ENCODE measurements at regions of chr19 and their contacts with region 1.

Region 1: GRCh38 chr19:23686621-23687423 is at the start of gene ZNF675:
- DNase-seq: peak; percentile 93
- ATAC-seq: peak; percentile 96
- H3K4me3 ChIP-seq: peak within 1 kb of the TSS; percentile 70 to 93 (median 83)
- H3K4me3 Mint-ChIP-seq: peak within 1 kb of the TSS; percentile 98
- H3K27ac ChIP-seq: peak within 1 kb of the TSS; percentile 80 to 90
- H3K27ac Mint-ChIP-seq: peak within 1 kb of the TSS; percentile 98
- H3K4me1 ChIP-seq: peaks cover 13 to 18% of the 10 kb centered on the region in 2 donors
- H3K4me1 Mint-ChIP-seq: peaks cover 48% of the 10 kb centered on the region
- H3K27me3 ChIP-seq: no peaks in the 10 kb centered on the region
- H3K27me3 Mint-ChIP-seq: no peaks in the 10 kb centered on the region
- CTCF ChIP-seq: no peak
- total RNA-seq, gene ZNF675: 46.1 and 46.7 TPM in 2 replicates

Region 2: DNA sequence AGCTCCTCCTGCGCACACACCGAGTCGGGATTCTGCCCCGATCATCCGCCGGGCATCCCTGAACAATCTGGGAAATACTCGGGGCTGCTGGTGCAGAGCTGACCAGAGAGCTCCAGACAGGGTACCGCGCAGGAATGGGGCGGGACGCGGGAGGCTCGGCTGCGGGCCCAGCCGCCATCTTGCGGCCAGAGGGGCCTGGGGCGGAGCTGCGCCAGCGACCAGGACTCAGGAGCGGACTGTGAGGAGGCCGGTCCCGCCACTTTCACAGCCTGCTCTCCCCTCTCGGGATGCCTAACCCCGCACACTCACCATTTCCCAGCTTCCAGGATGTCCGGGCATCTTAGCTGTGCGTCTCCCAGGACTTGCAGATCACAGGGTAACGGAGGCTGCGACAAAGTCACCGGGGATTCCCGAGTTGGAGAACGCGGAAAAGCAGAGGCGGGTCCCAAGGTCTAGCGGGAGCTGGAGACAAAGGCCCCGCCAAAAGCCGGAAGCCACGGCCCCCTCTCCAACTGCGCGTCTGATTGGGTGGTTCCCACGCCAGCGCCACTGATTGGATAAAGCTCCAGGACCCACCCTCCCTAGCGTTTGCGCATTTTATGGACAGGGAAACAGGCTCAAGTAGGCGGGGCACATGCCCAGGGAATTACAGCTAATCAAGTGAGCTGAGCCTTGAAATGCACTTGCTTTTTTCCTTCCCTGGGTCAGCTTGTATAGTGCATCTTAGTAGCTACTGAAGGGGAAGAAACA is 1835.1 kb before region 1 on chr19:
- CTCF ChIA-PET with region 1: no interaction called
- POLR2A ChIA-PET with region 1: no interaction called
- intact Hi-C with region 1: loop called (anchors 5 kb)
- DNase-seq: peak; percentile 90
- ATAC-seq: peak; percentile 99
- H3K4me3 ChIP-seq: peak overlapping the region; percentile 68 to 98 (median 96)
- H3K4me3 Mint-ChIP-seq: peak overlapping the region; percentile 95
- H3K27ac ChIP-seq: peak overlapping the region; percentile 74 to 93
- H3K27ac Mint-ChIP-seq: peak overlapping the region; percentile 91
- H3K4me1 ChIP-seq: peaks cover 5 to 15% of the 10 kb centered on the region in 2 donors
- H3K4me1 Mint-ChIP-seq: peaks cover 21% of the 10 kb centered on the region
- H3K27me3 ChIP-seq: no peaks in the 10 kb centered on the region
- H3K27me3 Mint-ChIP-seq: no peaks in the 10 kb centered on the region
- CTCF ChIP-seq: no peak

Region 3: DNA sequence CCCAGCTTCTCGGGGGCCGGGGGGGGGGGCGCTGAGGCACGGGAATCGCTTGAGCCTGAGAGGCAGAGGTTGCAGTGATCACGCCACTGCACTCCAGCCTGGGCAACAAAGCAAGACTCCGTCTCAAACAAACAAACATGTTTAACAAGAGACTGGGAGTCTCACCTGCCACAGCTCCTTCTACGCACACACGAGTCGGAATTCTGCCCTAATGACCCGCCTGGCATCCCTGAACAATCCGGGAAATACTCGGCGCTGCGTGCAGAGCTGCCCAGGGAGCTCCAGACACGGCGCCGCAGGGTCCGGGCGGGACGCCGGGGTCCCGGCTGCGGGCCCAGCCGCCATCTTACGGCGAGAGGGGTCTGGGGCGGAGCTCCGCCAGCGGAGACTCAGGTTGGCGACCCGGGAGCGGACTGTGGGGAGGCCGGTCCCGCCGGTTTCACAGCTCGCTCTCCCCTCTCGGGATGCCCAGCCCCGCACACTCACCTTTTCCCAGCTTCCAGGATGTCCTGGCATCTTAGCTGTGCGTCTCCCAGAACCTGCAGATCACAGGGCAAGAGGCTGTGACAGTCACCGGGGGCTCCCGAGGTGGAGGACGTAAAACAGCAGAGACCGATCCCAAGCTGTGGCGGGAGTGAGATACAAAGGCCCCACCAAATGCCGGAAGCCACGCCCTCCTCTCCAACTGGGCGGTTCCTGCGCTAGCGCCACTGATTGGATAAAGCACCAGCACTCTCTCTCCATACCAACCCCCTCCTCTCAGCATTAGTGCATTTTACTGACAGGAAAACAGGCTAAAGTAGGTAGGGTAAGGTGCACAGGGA is 413.0 kb before region 1 on chr19:
- CTCF ChIA-PET with region 1: no interaction called
- POLR2A ChIA-PET with region 1: no interaction called
- intact Hi-C with region 1: loop called (anchors 5 kb)
- DNase-seq: peak; percentile 91
- ATAC-seq: peak; percentile 99
- H3K4me3 ChIP-seq: peak overlapping the region; percentile 81 to 99 (median 96)
- H3K4me3 Mint-ChIP-seq: peak overlapping the region; percentile 98
- H3K27ac ChIP-seq: peak overlapping the region; percentile 85 to 89
- H3K27ac Mint-ChIP-seq: peak overlapping the region; percentile 97
- H3K4me1 ChIP-seq: peaks cover 6 to 20% of the 10 kb centered on the region in 2 donors
- H3K4me1 Mint-ChIP-seq: peaks cover 30% of the 10 kb centered on the region
- H3K27me3 ChIP-seq: no peaks in the 10 kb centered on the region
- H3K27me3 Mint-ChIP-seq: no peaks in the 10 kb centered on the region
- CTCF ChIP-seq: no peak

Region 4: GRCh38 chr19:24033301-24033962 is 346.6 kb after region 1 on chr19:
- CTCF ChIA-PET with region 1: no interaction called
- POLR2A ChIA-PET with region 1: no interaction called
- intact Hi-C with region 1: loop called (anchors 5 kb)
- DNase-seq: peak; percentile 84
- ATAC-seq: peak; percentile 98
- H3K4me3 ChIP-seq: peak overlapping the region; percentile 78 to 99 (median 93)
- H3K4me3 Mint-ChIP-seq: peak overlapping the region; percentile 99
- H3K27ac ChIP-seq: peak overlapping the region; percentile 85 to 89
- H3K27ac Mint-ChIP-seq: peak overlapping the region; percentile 98
- H3K4me1 ChIP-seq: peaks cover 24 to 56% of the 10 kb centered on the region in 2 donors
- H3K4me1 Mint-ChIP-seq: peaks cover 35% of the 10 kb centered on the region
- H3K27me3 ChIP-seq: no peaks in the 10 kb centered on the region
- H3K27me3 Mint-ChIP-seq: no peaks in the 10 kb centered on the region
- CTCF ChIP-seq: no peak

Region 5: GRCh38 chr19:24086974-24087595 is 400.3 kb after region 1 on chr19 and contains the start of gene ZNF254:
- CTCF ChIA-PET with region 1: interaction called, 3 read pairs
- POLR2A ChIA-PET with region 1: no interaction called
- intact Hi-C with region 1: loop called (anchors 5 kb)
- DNase-seq: peak; percentile 89
- ATAC-seq: peak; percentile 99
- H3K4me3 ChIP-seq: peak within 1 kb of the TSS; percentile 61 to 91 (median 74)
- H3K4me3 Mint-ChIP-seq: peak within 1 kb of the TSS; percentile 96
- H3K27ac ChIP-seq: peak within 1 kb of the TSS; percentile 84 to 89
- H3K27ac Mint-ChIP-seq: peak within 1 kb of the TSS; percentile 95
- H3K4me1 ChIP-seq: peaks cover 0 to 14% of the 10 kb centered on the region in 2 donors
- H3K4me1 Mint-ChIP-seq: peaks cover 15% of the 10 kb centered on the region
- H3K27me3 ChIP-seq: no peaks in the 10 kb centered on the region
- H3K27me3 Mint-ChIP-seq: no peaks in the 10 kb centered on the region
- CTCF ChIP-seq: no peak
- total RNA-seq, gene ZNF254: 25.2 and 28.8 TPM in 2 replicates

Measured in B cell (primary cell).